H1 (cell line): ENCODE measurements at regions of chr12 and their contacts with region 1.

Region 1: GRCh38 chr12:106108185-106108835 is 30.4 kb downstream of the NUAK1 start:
- DNase-seq: peak in 1 of 2 experiments; percentile 49
- H3K4me3 ChIP-seq: peak overlapping the region in 1 of 4 experiments; percentile 23; a peak in 1 of 8 replicates
- H3K27ac ChIP-seq: peak overlapping the region; percentile 39; the same call in 1 of the 2 replicates
- H3K4me1 ChIP-seq: peaks cover 23 to 47% (median 43%) of the 10 kb centered on the region in 4 experiments
- H3K27me3 ChIP-seq: no peaks in the 10 kb centered on the region
- CTCF ChIP-seq: no peak
- EP300 ChIP-seq: no peak
- POLR2A ChIP-seq: no peak
- RAD21 ChIP-seq: peak in 1 of 2 experiments; percentile 10; a peak in 2 of 4 replicates

Region 2: DNA sequence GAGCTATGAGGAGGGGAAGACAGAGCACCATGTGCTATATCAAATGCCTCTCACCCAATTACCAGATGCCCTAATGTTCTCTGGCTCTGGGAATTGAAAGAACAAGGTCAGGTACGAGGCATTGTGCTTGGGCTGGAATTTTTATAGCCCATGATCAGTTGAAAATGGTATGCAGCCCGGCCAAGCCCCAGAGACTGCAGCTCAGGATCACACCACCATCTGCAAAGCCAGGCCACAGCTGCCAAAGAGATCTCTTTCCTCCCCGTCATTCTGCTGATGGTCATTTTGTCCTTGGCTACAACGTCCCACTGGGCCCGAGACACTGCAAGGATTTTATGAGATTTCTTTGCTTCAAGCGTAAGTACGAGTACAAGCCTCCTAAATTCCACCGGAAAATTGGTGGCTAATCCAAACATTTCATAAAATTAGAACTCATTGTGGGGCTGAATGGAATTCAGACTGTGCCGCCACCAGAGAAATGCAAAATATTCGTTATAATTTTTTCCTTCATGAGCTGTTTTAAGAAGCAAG is 15.3 kb after region 1 on chr12:
- CTCF ChIA-PET with region 1: interaction called, 17 read pairs
- POLR2A ChIA-PET with region 1: interaction called, 11 read pairs
- DNase-seq: no peak
- H3K4me3 ChIP-seq: no peak overlapping the region
- H3K27ac ChIP-seq: no peak overlapping the region
- H3K4me1 ChIP-seq: peaks cover 3 to 19% (median 9%) of the 10 kb centered on the region in 4 experiments; a peak in 6 of 7 replicates
- H3K27me3 ChIP-seq: no peaks in the 10 kb centered on the region
- CTCF ChIP-seq: no peak
- EP300 ChIP-seq: no peak
- POLR2A ChIP-seq: no peak
- RAD21 ChIP-seq: no peak

Region 3: DNA sequence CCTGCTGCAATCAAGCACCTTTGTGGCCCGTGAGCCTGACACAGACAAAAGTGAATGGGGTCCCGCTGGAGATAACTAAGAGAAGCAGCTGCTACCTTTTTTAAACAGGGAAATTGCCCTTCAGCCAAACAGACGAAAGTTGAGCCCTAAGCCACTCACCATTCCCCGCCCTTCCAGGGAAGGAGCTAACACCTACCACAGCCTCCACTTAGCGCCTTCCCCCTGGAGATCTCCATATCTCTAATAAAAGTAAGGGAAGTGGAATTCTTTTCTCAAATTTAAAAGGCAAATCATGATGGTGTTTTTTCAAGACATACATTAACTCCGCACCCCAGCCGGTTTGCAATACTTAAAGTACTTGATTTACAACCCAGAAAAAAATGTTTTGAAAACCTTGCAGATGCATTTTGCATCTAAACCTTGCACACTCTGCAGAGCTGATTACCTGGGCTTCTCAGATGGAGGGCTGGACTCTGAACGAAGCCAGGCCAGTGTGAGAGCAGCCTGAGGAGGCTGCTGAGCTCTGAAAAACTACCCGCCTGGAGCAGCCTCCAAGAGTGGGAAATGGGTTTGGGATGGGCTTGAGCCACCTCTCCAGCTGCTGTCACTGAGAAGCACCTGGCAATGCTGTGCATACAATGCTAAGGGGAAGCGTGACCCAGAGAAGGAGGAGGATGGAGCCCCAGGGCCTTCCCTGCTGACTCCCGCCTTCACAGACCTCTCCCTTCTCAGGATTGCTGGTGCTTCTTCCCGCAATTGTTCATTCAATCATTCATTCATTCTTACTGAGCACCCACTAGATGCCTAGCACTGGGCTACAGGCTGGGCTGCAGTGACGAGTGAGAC is 20.5 kb after region 1 on chr12:
- CTCF ChIA-PET with region 1: interaction called, 13 read pairs
- POLR2A ChIA-PET with region 1: interaction called, 28 read pairs
- DNase-seq: no peak
- H3K4me3 ChIP-seq: no peak overlapping the region
- H3K27ac ChIP-seq: no peak overlapping the region
- H3K4me1 ChIP-seq: peaks cover 33 to 49% (median 38%) of the 10 kb centered on the region in 4 experiments
- H3K27me3 ChIP-seq: no peaks in the 10 kb centered on the region
- CTCF ChIP-seq: no peak
- EP300 ChIP-seq: no peak
- POLR2A ChIP-seq: no peak
- RAD21 ChIP-seq: no peak